ENCODE measurements at regions of chr12 and their contacts with region 1.

Region 1: GRCh38 chr12:15856097-15856982 is 25.8 kb upstream of the STRAP start:
- DNase-seq: no peak
- H3K4me3 ChIP-seq: no peak overlapping the region
- H3K27ac ChIP-seq: no peak overlapping the region
- H3K4me1 ChIP-seq: peaks cover 0 to 3% (median 0%) of the 10 kb centered on the region in 6 donors
- H3K27me3 ChIP-seq: peaks cover 0 to 14% (median 0%) of the 10 kb centered on the region in 7 donors
- CTCF ChIP-seq: peak; percentile 30 to 79 (median 70)
- POLR2A ChIP-seq: no peak

Region 2: GRCh38 chr12:15276088-15276698 is 580.1 kb before region 1 on chr12:
- intact Hi-C with region 1: loop called (anchors 10 kb)
- DNase-seq: no peak
- H3K4me3 ChIP-seq: no peak overlapping the region
- H3K27ac ChIP-seq: no peak overlapping the region
- H3K4me1 ChIP-seq: peaks cover 0 to 15% (median 9%) of the 10 kb centered on the region in 6 donors
- H3K27me3 ChIP-seq: peaks cover 0 to 6% (median 0%) of the 10 kb centered on the region in 7 donors
- CTCF ChIP-seq: peak in 9 of 11 experiments; percentile 40 to 68 (median 51)
- POLR2A ChIP-seq: no peak

Region 3: GRCh38 chr12:15590180-15590826 is 266.0 kb before region 1 on chr12:
- intact Hi-C with region 1: loop called (anchors 5 kb)
- DNase-seq: peak; percentile 77
- H3K4me3 ChIP-seq: peak overlapping the region in 3 of 8 donors; percentile 1 to 49 (median 15)
- H3K27ac ChIP-seq: no peak overlapping the region
- H3K4me1 ChIP-seq: peaks cover 3 to 11% (median 8%) of the 10 kb centered on the region in 6 donors
- H3K27me3 ChIP-seq: peaks cover 0 to 13% (median 0%) of the 10 kb centered on the region in 7 donors
- CTCF ChIP-seq: peak; percentile 66 to 89 (median 85)
- POLR2A ChIP-seq: no peak